Dorsolateral prefrontal cortex (tissue), 120 donors: ENCODE measurements at regions of chr9 and their contacts with region 1.

Region 1: DNA sequence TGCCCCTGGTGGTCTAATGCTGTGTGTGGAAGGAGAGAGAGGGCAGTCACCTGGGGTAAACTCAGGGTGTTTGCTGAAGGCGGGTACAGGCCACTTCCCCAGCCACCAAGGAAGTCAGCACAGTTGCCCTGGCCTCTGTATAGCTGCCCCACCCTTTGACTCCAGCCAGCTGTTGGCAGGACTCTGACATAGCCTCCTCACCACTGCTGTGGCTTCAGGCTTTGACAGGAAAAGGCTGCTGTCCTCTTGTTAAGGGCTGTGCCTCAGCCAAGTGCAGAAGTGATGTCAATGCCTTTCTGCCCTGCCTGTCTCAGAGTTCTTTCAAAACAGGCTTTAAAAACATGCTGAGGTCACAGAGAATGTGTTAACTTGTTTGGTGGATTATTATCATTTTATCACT is 487.2 kb upstream of the KLF4 start:
- DNase-seq: no peak
- H3K4me3 ChIP-seq: no peak overlapping the region
- H3K27ac ChIP-seq: no peak overlapping the region
- H3K27me3 ChIP-seq: peaks cover 0 to 3% (median 0%) of the 10 kb centered on the region in 45 donors
- CTCF ChIP-seq: no peak

Region 2: DNA sequence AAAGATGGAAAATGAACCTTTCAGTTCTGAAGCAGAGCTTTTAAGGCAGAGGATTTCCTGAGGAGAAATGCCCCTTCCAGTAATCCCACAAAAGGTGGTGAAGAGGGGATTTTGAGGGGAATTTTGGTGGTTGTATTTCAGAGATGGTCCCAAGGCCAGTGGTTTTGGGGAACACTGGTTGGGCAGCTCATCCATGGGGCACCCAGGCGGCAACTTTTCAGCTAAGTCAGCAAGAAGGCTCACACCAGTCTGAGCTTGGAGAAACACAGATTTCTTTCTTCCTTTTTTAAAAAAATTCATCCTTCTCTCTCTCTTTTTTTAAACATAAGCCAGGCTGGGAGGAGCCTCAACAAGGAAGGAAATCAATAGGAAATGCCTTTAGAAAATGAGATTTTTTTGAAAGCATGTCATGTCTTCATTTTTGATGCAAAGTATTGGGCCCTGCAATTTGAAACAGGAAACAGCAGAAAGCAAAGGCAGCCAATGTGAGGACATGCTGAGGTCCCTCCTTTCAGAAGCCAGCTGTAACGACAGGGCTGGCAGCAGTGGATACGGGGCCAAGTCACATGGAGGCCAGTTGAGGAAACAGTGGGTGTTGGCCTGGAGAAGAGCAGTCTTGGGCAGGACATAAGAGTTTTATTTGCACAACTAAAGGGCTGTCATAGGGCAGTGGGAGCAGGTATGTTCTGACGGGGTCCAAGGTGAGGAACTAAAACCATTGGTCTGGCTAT is 331.9 kb before region 1 on chr9:
- intact Hi-C with region 1: loop called in 1 of 2 experiments (anchors 10 kb)
- DNase-seq: no peak
- H3K4me3 ChIP-seq: no peak overlapping the region
- H3K27ac ChIP-seq: peak overlapping the region in 6 of 59 donors; percentile 4 to 32 (median 18)
- H3K27me3 ChIP-seq: peaks cover 0 to 2% (median 0%) of the 10 kb centered on the region in 45 donors
- CTCF ChIP-seq: no peak